ENCODE measurements at regions of chr9 and their contacts with region 1.

Region 1: GRCh38 chr9:21624675-21625644 is 142.8 kb upstream of the IFNE start:
- DNase-seq: no peak
- ATAC-seq: no peak
- H3K4me3 ChIP-seq: no peak overlapping the region
- H3K4me3 Mint-ChIP-seq: no peak overlapping the region
- H3K27ac ChIP-seq: no peak overlapping the region
- H3K27ac Mint-ChIP-seq: no peak overlapping the region
- H3K4me1 ChIP-seq: no peaks in the 10 kb centered on the region
- H3K4me1 Mint-ChIP-seq: peaks cover 20% of the 10 kb centered on the region
- H3K27me3 ChIP-seq: no peaks in the 10 kb centered on the region
- H3K27me3 Mint-ChIP-seq: no peaks in the 10 kb centered on the region
- CTCF ChIP-seq: no peak

Region 2: DNA sequence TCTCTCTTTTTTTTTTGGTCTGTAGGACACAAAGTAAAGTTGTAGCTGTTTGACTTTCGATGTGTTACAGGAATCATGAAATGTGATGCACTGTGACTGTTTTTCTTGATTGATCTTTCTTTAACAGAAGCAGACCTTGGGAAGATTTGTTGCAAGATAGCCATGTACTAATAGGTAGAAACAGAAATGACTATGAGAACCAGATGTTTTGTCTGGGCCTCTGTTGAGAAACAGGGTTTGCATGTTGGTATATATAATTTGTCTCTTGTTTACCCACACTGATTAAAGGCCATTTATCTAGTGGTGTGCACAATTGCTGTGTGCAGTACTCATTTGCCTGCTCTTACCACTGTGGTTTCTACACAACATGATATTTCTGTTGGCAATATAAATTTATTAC is 718.6 kb before region 1 on chr9:
- CTCF ChIA-PET with region 1: no interaction called
- POLR2A ChIA-PET with region 1: no interaction called
- intact Hi-C with region 1: no loop called
- DNase-seq: no peak
- ATAC-seq: no peak
- H3K4me3 ChIP-seq: no peak overlapping the region
- H3K4me3 Mint-ChIP-seq: no peak overlapping the region
- H3K27ac ChIP-seq: no peak overlapping the region
- H3K27ac Mint-ChIP-seq: no peak overlapping the region
- H3K4me1 ChIP-seq: no peaks in the 10 kb centered on the region
- H3K4me1 Mint-ChIP-seq: no peaks in the 10 kb centered on the region
- H3K27me3 ChIP-seq: no peaks in the 10 kb centered on the region
- H3K27me3 Mint-ChIP-seq: no peaks in the 10 kb centered on the region
- CTCF ChIP-seq: no peak

Region 3: GRCh38 chr9:21656776-21657674 is 32.1 kb after region 1 on chr9:
- CTCF ChIA-PET with region 1: interaction called, 3 read pairs
- POLR2A ChIA-PET with region 1: no interaction called
- intact Hi-C with region 1: loop called in 1 of 2 experiments (anchors 5 kb)
- DNase-seq: no peak
- ATAC-seq: no peak
- H3K4me3 ChIP-seq: no peak overlapping the region
- H3K4me3 Mint-ChIP-seq: no peak overlapping the region
- H3K27ac ChIP-seq: no peak overlapping the region
- H3K27ac Mint-ChIP-seq: no peak overlapping the region
- H3K4me1 ChIP-seq: no peaks in the 10 kb centered on the region
- H3K4me1 Mint-ChIP-seq: no peaks in the 10 kb centered on the region
- H3K27me3 ChIP-seq: peaks cover 0 to 5% of the 10 kb centered on the region in 2 experiments
- H3K27me3 Mint-ChIP-seq: no peaks in the 10 kb centered on the region
- CTCF ChIP-seq: no peak

Region 4: GRCh38 chr9:21770877-21771560 is 146.1 kb after region 1 on chr9:
- CTCF ChIA-PET with region 1: no interaction called
- POLR2A ChIA-PET with region 1: no interaction called
- intact Hi-C with region 1: no loop called
- DNase-seq: no peak
- ATAC-seq: no peak
- H3K4me3 ChIP-seq: no peak overlapping the region
- H3K4me3 Mint-ChIP-seq: no peak overlapping the region
- H3K27ac ChIP-seq: no peak overlapping the region
- H3K27ac Mint-ChIP-seq: no peak overlapping the region
- H3K4me1 ChIP-seq: peaks cover 1% of the 10 kb centered on the region
- H3K4me1 Mint-ChIP-seq: peaks cover 9% of the 10 kb centered on the region
- H3K27me3 ChIP-seq: no peaks in the 10 kb centered on the region
- H3K27me3 Mint-ChIP-seq: no peaks in the 10 kb centered on the region
- CTCF ChIP-seq: no peak

Measured in CD4-positive, alpha-beta T cell (primary cell).